Activated T-helper 1 cell treated with anti-CD3 and anti-CD28 coated beads, Interleukin-12 subunit alpha, Interleukin-12 subunit beta, Interleukin-2, Interleukin-4 antibody, amounts not matched to agents 30 ng/mL and 10 ng/mL and 1 ng/mL, durations not matched to agents 14 hours and 24 hours and 36 hours (primary cell): ENCODE measurements at regions of chr12 and their contacts with region 1.

Region 1: GRCh38 chr12:54993161-54993835 is 8.7 kb upstream of the TESPA1 start:
- DNase-seq: peak; percentile 41
- H3K4me3 Mint-ChIP-seq: no peak overlapping the region
- H3K27ac Mint-ChIP-seq: no peak overlapping the region
- H3K4me1 Mint-ChIP-seq: peaks cover 46% of the 10 kb centered on the region
- H3K27me3 Mint-ChIP-seq: no peaks in the 10 kb centered on the region

Region 2: DNA sequence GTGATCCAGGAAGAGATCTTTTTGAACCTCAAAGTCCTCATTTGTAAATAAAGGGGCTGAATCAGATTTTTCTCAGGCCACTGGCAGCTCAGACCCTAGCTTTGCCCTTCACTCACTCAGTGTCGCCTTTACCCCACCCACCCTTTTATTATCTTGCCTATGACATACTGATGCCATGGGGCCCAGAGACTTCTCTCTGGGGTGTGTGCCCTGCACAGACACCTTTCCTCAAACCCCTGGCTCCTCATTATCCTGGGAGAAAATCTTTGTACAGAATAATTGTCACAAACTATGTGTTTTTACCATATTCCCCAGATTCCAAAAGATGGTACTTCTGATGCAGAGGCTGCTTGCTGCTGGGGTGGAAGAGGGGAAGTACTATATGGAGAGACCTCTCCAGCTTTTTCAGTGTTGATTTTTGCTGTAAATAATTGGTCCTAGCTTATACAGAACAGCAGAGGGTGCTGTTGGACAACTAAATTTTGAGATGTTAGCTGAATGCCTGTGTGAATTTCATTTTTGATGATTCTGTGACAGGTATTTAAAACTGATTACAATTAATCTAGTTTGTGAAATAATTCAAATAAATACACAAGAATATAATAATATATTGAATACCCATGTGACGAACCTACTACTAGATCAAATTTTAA is 291.2 kb before region 1 on chr12:
- intact Hi-C with region 1: loop called (anchors 1 kb)
- DNase-seq: no peak
- H3K4me3 Mint-ChIP-seq: no peak overlapping the region
- H3K27ac Mint-ChIP-seq: no peak overlapping the region
- H3K4me1 Mint-ChIP-seq: no peaks in the 10 kb centered on the region
- H3K27me3 Mint-ChIP-seq: peaks cover 10% of the 10 kb centered on the region

Region 3: GRCh38 chr12:54749191-54749818 is 244.0 kb before region 1 on chr12:
- intact Hi-C with region 1: loop called (anchors 1 kb)
- DNase-seq: peak; percentile 31
- H3K4me3 Mint-ChIP-seq: no peak overlapping the region
- H3K27ac Mint-ChIP-seq: no peak overlapping the region
- H3K4me1 Mint-ChIP-seq: peaks cover 21% of the 10 kb centered on the region
- H3K27me3 Mint-ChIP-seq: peaks cover 5% of the 10 kb centered on the region

Region 4: GRCh38 chr12:54853995-54854566 is 139.2 kb before region 1 on chr12 and contains the start of gene MUCL1:
- intact Hi-C with region 1: loop called (anchors 1 kb)
- DNase-seq: peak; percentile 66
- H3K4me3 Mint-ChIP-seq: no peak within 1 kb of the TSS
- H3K27ac Mint-ChIP-seq: no peak within 1 kb of the TSS
- H3K4me1 Mint-ChIP-seq: peaks cover 15% of the 10 kb centered on the region
- H3K27me3 Mint-ChIP-seq: peaks cover 1% of the 10 kb centered on the region
- total RNA-seq, gene MUCL1: not detected in 2 replicates

Region 5: DNA sequence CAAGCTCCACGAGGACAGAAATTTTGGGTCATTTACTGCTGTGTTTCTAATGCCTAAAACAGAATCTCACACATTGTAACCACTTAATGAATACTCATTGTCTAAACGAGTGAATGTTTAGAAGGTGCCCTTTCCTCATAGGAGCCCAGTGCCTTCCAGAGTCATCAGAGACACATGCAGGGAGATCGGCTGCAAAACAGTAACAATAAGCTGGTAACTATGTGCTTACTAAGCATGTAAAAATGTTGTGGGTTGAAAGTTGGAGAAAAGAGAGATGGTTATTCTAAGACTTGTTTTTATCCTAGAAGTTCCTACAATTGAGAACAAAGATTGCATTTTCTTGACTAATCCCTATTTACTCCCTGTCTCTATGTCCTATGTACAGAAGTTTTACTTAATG is 16.1 kb before region 1 on chr12:
- intact Hi-C with region 1: loop called (anchors 1 kb)
- DNase-seq: no peak
- H3K4me3 Mint-ChIP-seq: peak overlapping the region; percentile 90
- H3K27ac Mint-ChIP-seq: peak overlapping the region; percentile 60
- H3K4me1 Mint-ChIP-seq: peaks cover 94% of the 10 kb centered on the region
- H3K27me3 Mint-ChIP-seq: no peaks in the 10 kb centered on the region

Region 6: DNA sequence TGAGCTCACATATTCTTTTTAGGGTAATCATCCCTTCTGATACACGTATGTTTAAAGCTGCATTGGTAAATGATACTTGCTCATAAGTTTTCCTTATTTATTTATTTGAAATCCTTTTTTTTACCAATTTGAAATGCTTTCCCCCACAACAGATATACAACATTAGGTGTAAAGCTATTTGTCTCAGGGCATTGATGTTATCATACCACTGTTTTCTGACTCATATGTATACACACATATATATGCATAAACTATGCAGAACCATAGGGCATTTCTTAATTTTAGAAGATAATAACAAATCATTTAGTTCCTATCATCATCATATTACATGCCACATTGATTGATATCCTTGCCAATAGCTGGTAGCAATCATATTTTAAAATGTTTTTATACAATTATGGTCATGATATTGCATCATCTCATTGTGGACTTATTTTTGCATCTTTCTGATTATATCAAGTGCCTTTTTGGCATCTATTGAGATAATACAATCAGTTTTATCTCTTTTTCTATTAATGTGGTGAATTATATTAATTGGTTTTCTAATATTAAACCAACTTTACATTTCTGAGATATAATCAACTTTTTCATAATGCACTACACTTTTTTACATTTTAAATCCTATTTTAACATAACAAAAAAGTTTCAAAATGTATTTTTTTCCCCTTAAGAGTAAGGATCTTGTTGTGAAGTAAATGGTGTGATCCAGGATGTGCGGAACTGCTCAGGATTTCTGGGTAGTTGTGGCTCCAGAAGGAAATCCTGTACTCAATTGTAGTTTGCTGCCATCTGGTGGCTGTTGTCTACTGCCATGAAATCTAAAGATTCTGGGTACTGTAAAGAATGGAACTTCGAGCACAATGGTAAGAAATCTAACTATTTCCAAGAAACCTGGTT is 149.6 kb after region 1 on chr12:
- intact Hi-C with region 1: loop called (anchors 1 kb)
- DNase-seq: peak; percentile 9
- H3K4me3 Mint-ChIP-seq: no peak overlapping the region
- H3K27ac Mint-ChIP-seq: no peak overlapping the region
- H3K4me1 Mint-ChIP-seq: no peaks in the 10 kb centered on the region
- H3K27me3 Mint-ChIP-seq: peaks cover 5% of the 10 kb centered on the region

Region 7: DNA sequence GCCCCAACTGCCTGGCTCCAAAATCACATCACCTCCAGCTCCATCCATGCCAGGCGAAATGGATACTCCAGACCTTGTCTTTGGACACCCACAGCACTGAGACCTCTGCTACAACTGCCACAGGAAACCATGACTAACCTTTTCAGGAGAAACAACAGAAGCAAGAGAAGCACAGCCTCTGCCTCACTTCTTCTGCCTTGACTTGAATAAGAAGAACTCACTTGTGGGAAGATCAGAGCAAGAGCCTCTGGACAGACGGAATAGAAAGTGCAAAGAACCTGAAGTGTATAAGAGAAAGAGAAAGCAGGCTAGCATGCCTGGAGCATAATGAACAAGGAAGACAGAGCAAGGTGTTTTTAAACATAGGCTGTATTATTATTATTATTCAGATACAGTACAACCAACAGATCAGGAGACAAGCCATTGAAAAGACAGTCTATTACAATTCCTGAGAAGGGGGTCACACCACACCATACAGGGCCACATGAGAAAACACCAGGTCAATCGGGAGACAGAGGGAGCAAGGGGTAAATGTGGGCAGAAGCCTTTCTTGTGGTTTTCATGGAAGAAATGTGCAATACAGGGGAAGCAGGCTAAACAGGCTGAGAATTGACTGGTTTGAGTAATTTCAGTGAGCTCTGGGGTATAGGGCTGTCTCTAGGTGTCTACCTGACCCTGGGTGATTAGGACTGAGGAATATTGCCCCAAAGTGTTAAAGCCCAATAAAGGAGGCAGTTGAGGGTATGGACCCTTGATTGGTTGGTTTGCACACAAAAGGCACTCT is 636.0 kb after region 1 on chr12:
- intact Hi-C with region 1: loop called (anchors 1 kb)
- DNase-seq: no peak
- H3K4me3 Mint-ChIP-seq: peak overlapping the region; percentile 0
- H3K27ac Mint-ChIP-seq: peak overlapping the region; percentile 54
- H3K4me1 Mint-ChIP-seq: peaks cover 23% of the 10 kb centered on the region
- H3K27me3 Mint-ChIP-seq: peaks cover 3% of the 10 kb centered on the region